OCI-LY7 (cell line): ENCODE measurements at regions of chr12 and their contacts with region 1.

Region 1: GRCh38 chr12:57213058-57213715 is 3.4 kb upstream of the NXPH4 start:
- DNase-seq: peak; percentile 85
- H3K4me3 ChIP-seq: no peak overlapping the region
- H3K27ac ChIP-seq: no peak overlapping the region
- H3K4me1 ChIP-seq: peaks cover 68% of the 10 kb centered on the region
- CTCF ChIP-seq: peak; percentile 91

Region 2: GRCh38 chr12:57138526-57139272 is 74.5 kb before region 1 on chr12:
- CTCF ChIA-PET with region 1: no interaction called
- POLR2A ChIA-PET with region 1: no interaction called
- intact Hi-C with region 1: no loop called
- DNase-seq: no peak
- H3K4me3 ChIP-seq: no peak overlapping the region
- H3K27ac ChIP-seq: no peak overlapping the region
- H3K4me1 ChIP-seq: no peaks in the 10 kb centered on the region
- CTCF ChIP-seq: no peak

Region 3: GRCh38 chr12:57229634-57230380 is 16.6 kb after region 1 on chr12 and contains the start of gene SHMT2:
- CTCF ChIA-PET with region 1: interaction called, 16 read pairs
- POLR2A ChIA-PET with region 1: interaction called, 8 read pairs
- intact Hi-C with region 1: loop called (anchors 1 kb)
- DNase-seq: peak; percentile 99
- H3K4me3 ChIP-seq: peak within 1 kb of the TSS; percentile 83
- H3K27ac ChIP-seq: peak within 1 kb of the TSS; percentile 61
- H3K4me1 ChIP-seq: peaks cover 66% of the 10 kb centered on the region
- CTCF ChIP-seq: no peak
- total RNA-seq, gene SHMT2: 394 and 400 TPM in 2 replicates